ENCODE measurements at regions of chr5 and their contacts with region 1.

Region 1: DNA sequence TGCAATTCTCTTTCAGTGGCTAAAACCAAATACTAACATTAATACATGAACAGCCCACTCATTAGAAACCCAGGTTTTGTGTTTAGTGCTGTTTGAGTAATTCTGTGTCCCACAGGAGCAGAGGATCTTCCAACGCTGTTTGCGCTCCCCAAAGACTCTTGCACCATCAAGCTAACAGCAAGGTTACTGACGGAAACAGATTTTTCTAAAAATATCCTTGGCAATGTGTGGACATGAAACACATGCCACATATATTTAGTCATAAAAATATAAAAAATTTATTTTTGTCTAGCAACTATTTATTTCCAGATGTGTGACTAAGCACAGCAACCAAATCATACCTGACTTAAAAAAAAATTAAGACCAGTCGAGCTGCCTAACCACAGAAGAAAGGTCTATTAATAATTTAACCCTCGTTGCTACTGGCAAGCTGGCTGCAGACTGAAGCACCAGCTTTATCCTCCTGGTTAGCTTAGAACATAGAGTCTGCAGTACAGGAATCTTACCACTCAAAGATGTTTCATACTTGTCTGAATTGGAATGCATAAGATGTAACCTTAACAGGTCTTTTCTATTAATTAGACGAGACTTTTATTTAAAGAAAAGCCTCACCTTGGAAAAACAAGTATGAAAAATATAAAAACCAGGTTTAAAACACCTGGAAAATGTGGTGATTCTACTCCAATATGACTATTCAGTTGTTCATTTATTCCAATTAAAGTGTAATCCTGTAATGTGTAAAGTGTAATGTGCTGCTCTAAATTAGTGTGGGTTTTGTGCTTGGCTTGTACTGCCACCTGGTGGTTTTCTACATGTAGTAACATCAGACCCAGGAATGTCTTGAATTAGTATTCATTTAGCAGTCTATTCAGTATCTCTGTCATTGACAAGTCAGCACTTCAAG is 272.5 kb downstream of the EPB41L4A start:
- DNase-seq: peak; percentile 83
- H3K4me3 Mint-ChIP-seq: no peak overlapping the region
- H3K27ac Mint-ChIP-seq: no peak overlapping the region
- H3K4me1 Mint-ChIP-seq: peaks cover 22% of the 10 kb centered on the region
- H3K27me3 Mint-ChIP-seq: no peaks in the 10 kb centered on the region
- CTCF ChIP-seq: peak; percentile 81

Region 2: GRCh38 chr5:111158105-111158744 is 988.4 kb before region 1 on chr5:
- CTCF ChIA-PET with region 1: interaction called, 5 read pairs
- POLR2A ChIA-PET with region 1: no interaction called
- intact Hi-C with region 1: loop called (anchors 1 kb)
- DNase-seq: peak; percentile 84
- H3K4me3 Mint-ChIP-seq: no peak overlapping the region
- H3K27ac Mint-ChIP-seq: no peak overlapping the region
- H3K4me1 Mint-ChIP-seq: no peaks in the 10 kb centered on the region
- H3K27me3 Mint-ChIP-seq: no peaks in the 10 kb centered on the region
- CTCF ChIP-seq: peak; percentile 99

Region 3: GRCh38 chr5:111530298-111530740 is 616.3 kb before region 1 on chr5:
- CTCF ChIA-PET with region 1: interaction called, 37 read pairs
- POLR2A ChIA-PET with region 1: interaction called, 4 read pairs
- intact Hi-C with region 1: loop called (anchors 2 kb)
- DNase-seq: peak; percentile 34
- H3K4me3 Mint-ChIP-seq: peak overlapping the region; percentile 0
- H3K27ac Mint-ChIP-seq: peak overlapping the region; percentile 3
- H3K4me1 Mint-ChIP-seq: peaks cover 8% of the 10 kb centered on the region
- H3K27me3 Mint-ChIP-seq: no peaks in the 10 kb centered on the region
- CTCF ChIP-seq: no peak

Region 4: GRCh38 chr5:111618623-111619271 is 527.8 kb before region 1 on chr5:
- CTCF ChIA-PET with region 1: no interaction called
- POLR2A ChIA-PET with region 1: no interaction called
- intact Hi-C with region 1: loop called (anchors 10 kb)
- DNase-seq: no peak
- H3K4me3 Mint-ChIP-seq: no peak overlapping the region
- H3K27ac Mint-ChIP-seq: no peak overlapping the region
- H3K4me1 Mint-ChIP-seq: no peaks in the 10 kb centered on the region
- H3K27me3 Mint-ChIP-seq: no peaks in the 10 kb centered on the region
- CTCF ChIP-seq: no peak

Region 5: DNA sequence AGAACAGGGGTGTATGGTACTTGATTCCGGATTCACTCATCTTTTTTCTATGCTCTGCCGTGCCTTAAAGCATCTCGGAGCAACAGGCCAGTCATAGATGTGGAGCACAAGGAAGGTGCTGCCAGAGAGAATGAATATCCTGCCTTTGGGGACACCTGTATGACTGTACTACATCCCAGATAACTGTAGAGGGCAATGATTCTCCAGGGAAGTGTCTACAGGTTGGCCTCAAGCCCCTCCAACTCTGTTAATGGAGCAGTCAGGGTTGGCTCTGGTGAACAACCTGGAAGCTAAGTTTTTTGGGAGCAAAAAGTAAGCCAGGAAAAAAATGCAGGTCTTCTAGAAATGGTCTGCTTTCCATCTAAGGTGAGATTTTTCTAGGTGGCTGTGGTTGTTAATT is 460.6 kb before region 1 on chr5:
- CTCF ChIA-PET with region 1: interaction called, 6 read pairs
- POLR2A ChIA-PET with region 1: interaction called, 3 read pairs
- intact Hi-C with region 1: loop called (anchors 1 kb)
- DNase-seq: peak; percentile 47
- H3K4me3 Mint-ChIP-seq: no peak overlapping the region
- H3K27ac Mint-ChIP-seq: no peak overlapping the region
- H3K4me1 Mint-ChIP-seq: peaks cover 8% of the 10 kb centered on the region
- H3K27me3 Mint-ChIP-seq: no peaks in the 10 kb centered on the region
- CTCF ChIP-seq: peak; percentile 28

Region 6: DNA sequence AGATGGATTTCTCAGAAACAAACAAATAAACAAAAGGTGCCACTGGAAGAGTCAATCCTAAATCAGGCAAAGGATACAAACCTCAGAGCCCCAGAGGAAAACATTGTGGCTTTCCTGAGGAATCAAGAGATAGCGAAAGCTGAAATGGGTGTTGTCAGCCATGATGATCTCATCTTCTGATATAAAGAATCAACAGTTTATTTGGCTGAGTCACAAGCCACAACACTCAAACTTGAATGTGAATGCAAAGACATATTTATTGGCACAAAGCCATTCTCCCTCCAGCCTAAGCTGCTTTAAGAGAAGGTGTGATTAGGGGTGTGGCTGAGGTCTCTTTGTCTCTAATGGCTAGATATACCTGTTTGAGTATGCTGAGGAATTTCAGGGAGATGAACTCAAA is 316.2 kb before region 1 on chr5:
- CTCF ChIA-PET with region 1: no interaction called
- POLR2A ChIA-PET with region 1: no interaction called
- intact Hi-C with region 1: loop called (anchors 1 kb)
- DNase-seq: peak; percentile 94
- H3K4me3 Mint-ChIP-seq: no peak overlapping the region
- H3K27ac Mint-ChIP-seq: peak overlapping the region; percentile 73
- H3K4me1 Mint-ChIP-seq: peaks cover 27% of the 10 kb centered on the region
- H3K27me3 Mint-ChIP-seq: no peaks in the 10 kb centered on the region
- CTCF ChIP-seq: no peak

Region 7: DNA sequence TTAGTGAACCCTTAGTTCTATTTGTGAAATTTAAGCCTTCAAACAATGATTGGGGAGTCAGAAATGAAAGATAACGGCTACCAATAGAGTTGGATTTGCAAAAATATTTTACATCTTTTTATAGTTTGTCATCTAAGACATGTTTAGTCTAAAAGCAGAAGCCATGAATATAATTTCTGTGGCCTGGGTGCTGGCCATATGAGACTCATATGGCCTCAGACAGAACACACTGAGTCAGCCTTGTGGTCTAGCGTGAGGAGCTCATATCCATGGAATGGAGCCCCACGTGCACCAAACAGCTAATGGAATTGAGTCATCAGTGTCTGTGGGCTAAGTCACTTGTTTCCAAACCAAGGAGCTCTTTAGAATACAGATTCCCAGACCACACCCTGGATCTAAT is 148.9 kb before region 1 on chr5:
- CTCF ChIA-PET with region 1: no interaction called
- POLR2A ChIA-PET with region 1: interaction called, 4 read pairs
- intact Hi-C with region 1: loop called (anchors 5 kb)
- DNase-seq: peak; percentile 92
- H3K4me3 Mint-ChIP-seq: no peak overlapping the region
- H3K27ac Mint-ChIP-seq: peak overlapping the region; percentile 54
- H3K4me1 Mint-ChIP-seq: peaks cover 28% of the 10 kb centered on the region
- H3K27me3 Mint-ChIP-seq: no peaks in the 10 kb centered on the region
- CTCF ChIP-seq: no peak